ENCODE measurements at regions of chr3 and their contacts with region 1.

Region 1: GRCh38 chr3:23202921-23203707 is at the start of gene UBE2E2:
- DNase-seq: peak; percentile 82
- total RNA-seq, gene UBE2E2: 48.1 TPM

Region 2: GRCh38 chr3:23455084-23455483 is 252.0 kb after region 1 on chr3:
- intact Hi-C with region 1: loop called (anchors 10 kb)
- DNase-seq: no peak

Region 3: DNA sequence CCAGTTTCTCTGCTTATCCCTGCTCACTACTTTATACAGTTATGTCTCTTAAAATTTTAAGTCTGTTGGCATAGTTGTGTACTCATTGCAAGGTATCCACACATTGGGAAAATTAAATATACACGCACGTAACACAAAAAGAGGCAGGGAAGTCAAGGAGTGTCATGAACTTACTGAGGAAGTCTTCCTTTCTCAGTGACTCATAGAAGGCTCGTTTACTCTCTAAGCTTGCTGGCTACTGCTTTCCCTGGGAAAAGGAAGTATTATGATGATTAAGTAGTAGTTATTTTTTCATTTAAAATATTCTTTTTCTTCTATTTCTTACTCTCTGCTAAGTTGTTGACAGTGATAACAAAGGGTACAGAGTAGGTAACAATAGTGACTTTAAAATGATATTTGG is 287.3 kb after region 1 on chr3:
- intact Hi-C with region 1: loop called (anchors 10 kb)
- DNase-seq: no peak

Region 4: GRCh38 chr3:23805633-23806533 is 602.8 kb after region 1 on chr3 and contains the start of gene UBE2E1:
- intact Hi-C with region 1: loop called (anchors 5 kb)
- DNase-seq: peak; percentile 89
- total RNA-seq, gene UBE2E1: 59.7 TPM